ENCODE measurements at regions of chr4 and their contacts with region 1.

Region 1: GRCh38 chr4:8615921-8616785 is 23.6 kb downstream of the CPZ start:
- DNase-seq: peak in 3 of 6 donors; percentile 5 to 44 (median 35)
- ATAC-seq: no peak
- H3K4me3 ChIP-seq: no peak overlapping the region
- H3K27ac ChIP-seq: no peak overlapping the region
- H3K4me1 ChIP-seq: no peaks in the 10 kb centered on the region
- H3K27me3 ChIP-seq: no peaks in the 10 kb centered on the region
- CTCF ChIP-seq: no peak

Region 2: GRCh38 chr4:8886612-8887406 is 270.7 kb after region 1 on chr4:
- intact Hi-C with region 1: loop called in 1 of 3 experiments (anchors 10 kb)
- DNase-seq: no peak
- ATAC-seq: no peak
- H3K4me3 ChIP-seq: no peak overlapping the region
- H3K27ac ChIP-seq: no peak overlapping the region
- H3K4me1 ChIP-seq: no peaks in the 10 kb centered on the region
- H3K27me3 ChIP-seq: peaks cover 0 to 22% (median 0%) of the 10 kb centered on the region in 4 donors
- CTCF ChIP-seq: peak in 1 of 4 donors; percentile 10